ENCODE measurements at regions of chr15 and their contacts with region 1.

Region 1: GRCh38 chr15:68304589-68305337 is 27.2 kb downstream of the FEM1B start:
- DNase-seq: peak; percentile 80
- H3K4me3 ChIP-seq: no peak overlapping the region
- H3K27ac ChIP-seq: no peak overlapping the region
- H3K4me1 ChIP-seq: peaks cover 8 to 25% (median 17%) of the 10 kb centered on the region in 4 donors
- H3K27me3 ChIP-seq: no peaks in the 10 kb centered on the region
- CTCF ChIP-seq: no peak
- EP300 ChIP-seq: no peak
- POLR2A ChIP-seq: no peak

Region 2: GRCh38 chr15:68252925-68253534 is 51.7 kb before region 1 on chr15:
- intact Hi-C with region 1: loop called (anchors 2 kb)
- DNase-seq: no peak
- H3K4me3 ChIP-seq: no peak overlapping the region
- H3K27ac ChIP-seq: no peak overlapping the region
- H3K4me1 ChIP-seq: peaks cover 13 to 33% (median 23%) of the 10 kb centered on the region in 4 donors
- H3K27me3 ChIP-seq: no peaks in the 10 kb centered on the region
- CTCF ChIP-seq: peak; percentile 85 to 89 (median 89)
- EP300 ChIP-seq: no peak
- POLR2A ChIP-seq: no peak

Region 3: DNA sequence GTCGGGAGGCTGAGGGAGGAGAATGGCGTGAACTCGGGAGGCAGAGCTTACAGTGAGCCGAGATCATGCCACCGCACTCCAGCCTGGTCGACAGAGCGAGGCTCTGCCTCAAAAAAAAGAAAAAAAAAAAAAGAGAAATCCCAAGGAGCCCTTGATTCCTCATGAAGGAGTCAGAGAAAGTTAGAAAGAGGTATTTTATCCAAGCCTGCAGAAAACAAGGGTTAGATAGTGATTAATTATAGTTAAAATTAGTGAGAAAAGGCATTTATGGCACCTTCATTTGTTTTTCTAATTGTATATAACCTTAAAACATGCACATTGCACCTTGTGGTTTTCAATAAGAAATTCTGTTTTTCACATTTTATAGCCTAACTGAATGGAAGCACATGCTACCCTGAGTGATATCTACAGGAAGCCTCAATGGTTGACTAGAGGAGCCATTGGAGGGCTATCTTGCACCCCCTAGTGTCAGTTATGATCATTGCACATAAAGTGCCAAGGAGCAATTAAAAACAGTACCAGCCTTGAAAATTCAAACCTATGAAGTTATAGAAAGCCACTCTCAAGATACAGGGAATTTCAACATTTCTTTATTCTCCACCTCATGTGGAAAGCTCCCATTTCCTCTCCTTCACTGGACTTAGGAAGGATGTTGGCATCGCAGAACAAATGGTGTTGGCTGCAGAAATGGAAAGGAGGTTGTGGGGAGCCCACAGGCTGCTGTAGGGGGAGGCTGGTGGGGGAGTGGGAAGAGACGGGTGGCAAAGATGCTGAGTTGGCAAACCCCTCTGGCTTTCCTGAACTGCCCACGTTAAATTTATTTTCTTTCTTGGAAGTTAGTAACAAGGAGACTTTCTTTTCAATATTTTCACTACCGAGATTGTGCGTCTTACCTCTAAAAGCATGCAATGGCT is 78.7 kb after region 1 on chr15:
- intact Hi-C with region 1: loop called (anchors 2 kb)
- DNase-seq: peak; percentile 74
- H3K4me3 ChIP-seq: no peak overlapping the region
- H3K27ac ChIP-seq: peak overlapping the region in 1 of 4 donors; percentile 27
- H3K4me1 ChIP-seq: peaks cover 0 to 14% (median 5%) of the 10 kb centered on the region in 4 donors
- H3K27me3 ChIP-seq: peaks cover 0 to 18% (median 0%) of the 10 kb centered on the region in 4 donors
- CTCF ChIP-seq: peak; percentile 66 to 77 (median 67)
- EP300 ChIP-seq: no peak
- POLR2A ChIP-seq: no peak

Region 4: GRCh38 chr15:68559345-68560310 is 254.9 kb after region 1 on chr15:
- intact Hi-C with region 1: loop called (anchors 10 kb)
- DNase-seq: no peak
- H3K4me3 ChIP-seq: peak overlapping the region; percentile 45 to 60 (median 48)
- H3K27ac ChIP-seq: no peak overlapping the region
- H3K4me1 ChIP-seq: peaks cover 9 to 17% (median 15%) of the 10 kb centered on the region in 4 donors
- H3K27me3 ChIP-seq: peaks cover 0 to 58% (median 4%) of the 10 kb centered on the region in 4 donors
- CTCF ChIP-seq: peak; percentile 92 to 99 (median 97)
- EP300 ChIP-seq: no peak
- POLR2A ChIP-seq: no peak

Measured in esophagus muscularis mucosa (tissue), 4 donors.